ENCODE measurements at regions of chr7 and their contacts with region 1.

Region 1: DNA sequence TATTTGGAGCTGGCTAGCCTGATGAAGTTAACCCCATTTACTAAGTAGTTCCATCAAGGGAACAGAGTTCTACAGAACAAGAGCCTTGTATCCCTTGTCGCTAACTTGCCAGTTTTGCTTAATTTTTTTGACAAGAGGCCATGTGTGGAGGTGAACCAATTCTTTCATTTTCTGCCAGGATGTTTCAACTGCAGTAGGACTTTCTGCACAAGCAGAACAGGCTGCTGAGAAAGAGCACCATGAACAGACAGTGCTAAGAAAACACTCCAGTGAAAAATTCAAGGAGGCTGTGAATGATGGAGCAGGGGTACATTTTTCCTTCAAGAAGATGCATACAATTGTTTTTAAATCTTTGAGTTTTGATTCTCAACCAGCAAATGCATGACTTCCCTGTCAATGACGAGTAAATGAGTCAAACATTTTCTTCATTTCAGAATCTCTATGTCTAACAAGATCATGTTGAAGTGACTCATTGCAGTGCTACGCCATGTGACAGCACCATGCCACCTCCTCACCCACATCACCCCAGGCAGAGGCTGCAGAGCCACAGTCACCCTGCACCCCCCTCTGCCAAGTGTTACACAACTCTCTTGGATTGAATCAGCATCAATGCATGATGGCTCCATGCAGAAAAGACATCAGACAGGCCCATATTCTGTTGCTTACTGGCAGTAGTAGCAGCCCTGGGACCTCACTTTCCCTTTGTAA is 193.1 kb downstream of the COBL start:
- DNase-seq: peak; percentile 52
- H3K4me3 Mint-ChIP-seq: no peak overlapping the region
- H3K27ac Mint-ChIP-seq: peak overlapping the region; percentile 84
- H3K4me1 Mint-ChIP-seq: peaks cover 31% of the 10 kb centered on the region
- H3K27me3 Mint-ChIP-seq: no peaks in the 10 kb centered on the region

Region 2: GRCh38 chr7:50349963-50350944 is 773.2 kb before region 1 on chr7:
- intact Hi-C with region 1: loop called (anchors 5 kb)
- DNase-seq: peak; percentile 77
- H3K4me3 Mint-ChIP-seq: peak overlapping the region; percentile 53
- H3K27ac Mint-ChIP-seq: peak overlapping the region; percentile 93
- H3K4me1 Mint-ChIP-seq: peaks cover 97% of the 10 kb centered on the region
- H3K27me3 Mint-ChIP-seq: no peaks in the 10 kb centered on the region

Region 3: GRCh38 chr7:50664461-50664922 is 459.0 kb before region 1 on chr7:
- intact Hi-C with region 1: loop called (anchors 5 kb)
- DNase-seq: no peak
- H3K4me3 Mint-ChIP-seq: no peak overlapping the region
- H3K27ac Mint-ChIP-seq: no peak overlapping the region
- H3K4me1 Mint-ChIP-seq: peaks cover 58% of the 10 kb centered on the region
- H3K27me3 Mint-ChIP-seq: peaks cover 3% of the 10 kb centered on the region

Region 4: DNA sequence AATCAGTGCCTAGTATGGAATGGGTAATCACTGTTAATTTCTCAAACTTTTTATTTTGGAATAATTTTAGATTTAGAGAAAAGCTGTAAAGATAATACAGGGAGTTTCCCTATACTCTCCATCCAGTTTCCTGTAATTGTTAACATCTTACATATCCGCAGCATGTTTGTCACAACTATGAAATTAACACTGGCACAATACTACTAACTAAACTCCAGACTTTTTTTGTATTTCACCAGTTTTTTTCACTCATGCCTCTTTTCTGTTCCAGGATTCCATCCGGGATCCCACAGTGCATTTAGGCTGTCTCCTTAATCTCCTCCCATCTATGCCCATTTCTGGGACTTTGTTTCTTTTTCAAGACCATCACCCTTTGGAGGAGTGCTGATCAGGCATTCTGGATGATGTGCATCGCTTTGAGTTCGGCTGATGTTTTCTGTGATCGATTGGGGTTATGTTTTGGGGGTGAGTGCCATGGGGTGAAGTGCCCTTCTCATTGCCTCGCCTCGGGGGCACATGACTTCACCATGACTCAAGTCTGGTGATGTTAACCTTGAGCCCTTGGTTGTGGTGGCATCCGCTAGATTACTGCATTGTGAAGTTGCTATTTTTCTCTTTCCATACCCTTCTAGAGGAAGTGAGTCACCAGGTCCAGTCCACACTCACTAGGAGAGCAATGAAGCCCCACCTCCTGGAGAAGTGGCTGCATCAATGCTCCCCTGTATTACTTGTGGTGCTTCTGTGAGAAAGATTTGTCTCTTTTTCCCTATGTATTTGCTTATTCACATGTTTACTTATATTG is 296.9 kb before region 1 on chr7:
- intact Hi-C with region 1: loop called (anchors 1 kb)
- DNase-seq: peak; percentile 33
- H3K4me3 Mint-ChIP-seq: peak overlapping the region; percentile 47
- H3K27ac Mint-ChIP-seq: peak overlapping the region; percentile 77
- H3K4me1 Mint-ChIP-seq: peaks cover 26% of the 10 kb centered on the region
- H3K27me3 Mint-ChIP-seq: peaks cover 9% of the 10 kb centered on the region